ENCODE measurements at regions of chr6 and their contacts with region 1.

Region 1: DNA sequence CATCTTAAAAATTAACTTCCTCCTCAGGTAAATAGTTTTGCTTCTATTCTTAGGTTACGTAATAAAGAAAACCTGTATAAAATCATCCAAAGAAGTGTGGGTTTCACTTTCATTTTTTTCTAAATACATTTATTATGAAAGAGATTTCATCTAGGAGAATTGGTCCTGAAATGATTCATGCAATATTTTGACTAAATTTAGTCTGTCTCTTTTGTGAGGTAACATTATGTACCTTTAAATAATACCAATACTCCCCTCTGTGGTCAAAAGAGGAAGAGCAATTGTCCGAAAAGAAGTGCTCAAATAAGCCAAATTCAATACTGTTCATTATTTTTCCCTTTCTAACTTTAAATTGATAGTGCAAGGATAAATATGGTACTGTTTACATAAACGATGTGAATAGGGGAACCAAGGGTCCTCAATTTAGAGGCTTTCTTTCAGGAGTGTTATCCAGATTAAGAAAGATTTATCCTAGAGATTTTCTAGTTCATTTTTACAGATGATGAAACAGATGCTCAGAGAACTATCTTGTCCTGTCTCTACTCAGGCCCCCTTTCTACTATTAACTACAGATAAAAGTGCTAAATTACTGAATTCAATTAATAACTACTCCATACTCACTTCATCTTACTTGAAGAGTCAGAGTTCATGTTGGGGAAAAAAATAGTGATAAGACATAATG is 26.2 kb downstream of the CYP39A1 start:
- DNase-seq: no peak

Region 2: GRCh38 chr6:46090115-46091079 is 536.0 kb before region 1 on chr6:
- intact Hi-C with region 1: loop called (anchors 10 kb)
- DNase-seq: no peak

Region 3: DNA sequence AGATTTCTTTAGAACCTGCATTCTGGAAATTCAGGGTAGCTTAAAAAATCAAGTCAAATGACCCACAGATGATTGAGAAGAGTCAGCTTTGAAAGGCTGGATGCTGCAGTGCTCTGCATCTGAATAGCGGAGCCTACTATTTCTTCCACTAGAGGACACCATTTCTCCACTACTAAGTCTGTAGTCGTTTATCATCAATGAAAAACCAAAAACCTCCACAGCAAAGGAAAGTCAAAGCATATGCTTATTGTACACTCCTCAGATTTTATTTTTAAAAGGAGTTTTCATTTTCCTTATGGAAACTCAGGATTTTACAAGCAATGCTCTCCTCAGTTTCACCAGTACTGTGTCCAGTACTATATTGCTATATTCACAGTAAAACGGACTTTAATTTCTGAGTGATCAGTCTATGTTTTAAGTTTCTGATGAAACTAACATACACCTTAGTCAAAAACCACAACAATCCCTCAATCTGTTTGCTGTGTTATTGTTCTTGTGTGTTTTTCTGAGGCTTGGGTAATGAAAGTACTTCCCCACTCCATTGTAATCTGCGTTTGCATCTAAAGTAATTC is 405.1 kb before region 1 on chr6:
- intact Hi-C with region 1: loop called (anchors 5 kb)
- DNase-seq: no peak

Region 4: GRCh38 chr6:46290421-46291274 is 335.7 kb before region 1 on chr6:
- intact Hi-C with region 1: no loop called
- DNase-seq: no peak

Region 5: GRCh38 chr6:46419576-46420002 is 206.8 kb before region 1 on chr6:
- intact Hi-C with region 1: loop called (anchors 2 kb)
- DNase-seq: no peak

Region 6: DNA sequence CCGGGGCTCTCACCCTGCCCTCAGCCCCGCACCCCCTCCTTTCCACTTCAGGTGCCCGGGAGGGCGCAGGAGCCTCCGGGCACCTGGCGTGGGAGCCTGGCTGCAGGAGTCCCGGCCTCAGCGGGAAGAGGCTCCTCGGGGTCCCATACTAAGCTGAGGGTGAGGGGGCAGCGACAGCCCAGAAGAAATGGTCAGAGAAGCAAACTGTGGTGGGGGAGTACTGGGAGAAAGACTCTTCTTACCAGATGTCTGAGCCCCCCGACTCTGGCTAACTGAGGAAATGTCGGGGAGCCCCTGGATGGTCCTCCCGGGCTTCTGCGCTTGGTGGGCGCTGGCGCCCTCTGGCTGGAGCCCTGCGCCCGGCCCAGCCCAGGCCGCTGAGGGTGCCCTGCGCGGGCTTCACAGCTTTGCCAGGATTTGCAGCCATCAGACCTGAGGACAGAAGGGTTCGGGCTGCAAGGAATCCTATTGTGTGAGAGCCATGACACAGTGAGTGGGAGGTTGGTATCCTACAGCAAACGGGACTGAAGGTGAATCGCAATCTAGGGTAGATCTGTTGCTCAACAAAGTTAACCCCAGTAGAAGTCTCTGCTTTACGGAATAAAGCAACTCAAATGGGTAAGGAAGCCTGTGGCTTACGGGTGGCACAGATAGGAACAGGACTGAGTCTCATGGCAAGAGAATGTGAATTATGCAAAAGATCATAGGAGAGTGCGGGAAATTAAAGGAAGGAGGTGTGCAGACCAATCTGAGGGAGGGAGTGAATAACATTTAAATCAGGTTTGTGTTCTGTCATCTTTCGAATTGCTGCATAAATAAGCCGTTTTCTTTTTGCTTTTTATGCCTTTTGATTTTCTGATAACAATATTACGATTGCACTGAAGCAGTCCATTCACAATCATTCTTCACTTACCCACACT is 134.5 kb before region 1 on chr6:
- intact Hi-C with region 1: loop called (anchors 5 kb)
- DNase-seq: peak; percentile 84

Measured in cardiac septum (tissue), 1 donor.